ENCODE measurements at regions of chr1 and their contacts with region 1.

Region 1: GRCh38 chr1:153566440-153567379 is 1.1 kb upstream of the S100A2 start:
- DNase-seq: peak; percentile 90 to 99 (median 93)
- ATAC-seq: peak; percentile 93 to 96 (median 94)
- H3K4me3 ChIP-seq: peak overlapping the region in 1 of 12 donors; percentile 15
- H3K27ac ChIP-seq: peak overlapping the region; percentile 7 to 96 (median 85)
- H3K4me1 ChIP-seq: peaks cover 11 to 53% (median 32%) of the 10 kb centered on the region in 12 donors
- H3K27me3 ChIP-seq: no peaks in the 10 kb centered on the region
- CTCF ChIP-seq: no peak
- POLR2A ChIP-seq: peak in 1 of 2 donors; percentile 46

Region 2: DNA sequence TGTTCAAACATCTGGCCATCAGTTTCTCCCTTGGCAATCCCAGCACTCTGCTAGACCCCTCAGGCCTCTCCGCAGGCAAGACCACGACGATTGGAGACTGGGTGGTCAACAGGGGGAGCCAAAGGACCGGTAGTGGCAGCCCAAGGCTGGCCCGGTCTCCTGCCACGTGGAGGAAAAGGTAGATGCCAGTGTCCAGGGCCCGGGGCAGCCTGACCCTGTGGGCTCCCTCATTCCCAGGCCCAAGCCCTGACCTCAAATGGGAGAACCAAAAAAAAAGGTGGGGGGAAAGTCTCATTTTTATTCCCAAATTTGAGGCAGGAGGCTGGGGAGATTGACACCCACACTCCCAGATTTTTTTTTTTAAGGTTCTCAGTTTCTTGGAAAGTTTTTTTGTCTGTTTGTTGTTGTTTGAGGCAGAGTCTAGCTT is 55.7 kb before region 1 on chr1:
- intact Hi-C with region 1: loop called (anchors 1 to 2 kb)
- DNase-seq: peak; percentile 82 to 88 (median 84)
- ATAC-seq: peak; percentile 60 to 62 (median 60)
- H3K4me3 ChIP-seq: no peak overlapping the region
- H3K27ac ChIP-seq: no peak overlapping the region
- H3K4me1 ChIP-seq: peaks cover 0 to 32% (median 21%) of the 10 kb centered on the region in 12 donors
- H3K27me3 ChIP-seq: no peaks in the 10 kb centered on the region
- CTCF ChIP-seq: peak; percentile 81 to 97 (median 90)
- POLR2A ChIP-seq: no peak

Region 3: GRCh38 chr1:153532769-153533599 is 33.7 kb before region 1 on chr1:
- intact Hi-C with region 1: loop called in 9 of 10 experiments (anchors 1 to 5 kb)
- DNase-seq: peak; percentile 83 to 91 (median 84)
- ATAC-seq: peak; percentile 35 to 70 (median 52)
- H3K4me3 ChIP-seq: peak overlapping the region in 10 of 12 donors; percentile 14 to 97 (median 90)
- H3K27ac ChIP-seq: peak overlapping the region in 11 of 12 donors; percentile 3 to 100 (median 98)
- H3K4me1 ChIP-seq: peaks cover 0 to 54% (median 28%) of the 10 kb centered on the region in 12 donors
- H3K27me3 ChIP-seq: no peaks in the 10 kb centered on the region
- CTCF ChIP-seq: peak; percentile 63 to 89 (median 80)
- POLR2A ChIP-seq: no peak

Region 4: GRCh38 chr1:153545067-153546055 is 21.3 kb before region 1 on chr1 and contains the start of gene S100A4:
- intact Hi-C with region 1: loop called in 2 of 10 experiments (anchors 1 to 2 kb)
- DNase-seq: peak; percentile 94 to 97 (median 95)
- ATAC-seq: peak; percentile 82 to 93 (median 91)
- H3K4me3 ChIP-seq: peak within 1 kb of the TSS in 11 of 12 donors; percentile 21 to 71 (median 55)
- H3K27ac ChIP-seq: peak within 1 kb of the TSS; percentile 38 to 93 (median 82)
- H3K4me1 ChIP-seq: peaks cover 11 to 100% (median 46%) of the 10 kb centered on the region in 12 donors
- H3K27me3 ChIP-seq: no peaks in the 10 kb centered on the region
- CTCF ChIP-seq: no peak
- POLR2A ChIP-seq: peak in 1 of 2 donors; percentile 60
- total RNA-seq, gene S100A4: 56.9 to 214 (median 96.1) TPM

Measured in heart left ventricle (tissue), 16 donors.